Heart right ventricle (tissue), 16 donors: ENCODE measurements at regions of chr12 and their contacts with region 1.

Region 1: DNA sequence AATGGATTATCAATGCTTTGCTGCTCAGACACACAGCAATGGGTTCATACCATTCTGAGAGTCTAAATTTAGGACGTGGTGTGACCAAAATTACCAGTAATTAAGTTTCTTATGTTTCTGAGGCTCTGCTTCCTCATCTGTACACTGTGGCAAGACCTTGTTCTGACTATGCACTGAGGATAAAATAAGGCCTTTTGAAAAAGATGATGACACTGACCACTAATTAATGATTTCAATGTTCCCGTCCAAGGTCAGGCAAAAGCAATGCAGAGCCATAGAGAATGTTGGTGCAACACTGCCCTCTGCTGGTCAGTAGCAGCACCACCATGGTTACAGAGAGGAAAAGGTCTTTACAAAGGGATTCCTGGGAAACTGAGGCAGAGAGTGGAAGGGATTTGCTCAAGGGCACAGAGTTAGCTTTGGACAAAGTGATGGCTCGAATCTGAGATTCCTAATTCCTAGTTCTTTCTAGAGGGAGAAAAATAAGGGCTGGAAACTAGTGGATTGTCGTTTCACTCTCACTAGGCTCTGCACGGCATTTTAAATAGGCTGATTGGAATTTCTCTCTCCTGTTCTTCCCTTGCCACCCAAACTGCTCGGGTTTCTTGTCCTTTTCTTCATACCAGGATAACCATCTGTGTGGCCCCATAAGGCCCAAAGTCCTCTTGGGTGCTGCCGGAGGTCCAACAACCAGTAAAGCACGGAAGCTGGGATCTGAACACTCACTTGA is 22.3 kb upstream of the P2RX7 start:
- DNase-seq: peak; percentile 39 to 65
- ATAC-seq: peak; percentile 68 to 86 (median 79)
- H3K4me3 ChIP-seq: no peak overlapping the region
- H3K27ac ChIP-seq: no peak overlapping the region
- H3K4me1 ChIP-seq: peaks cover 0 to 7% (median 0%) of the 10 kb centered on the region in 9 donors
- H3K27me3 ChIP-seq: no peaks in the 10 kb centered on the region
- CTCF ChIP-seq: peak; percentile 86 to 98 (median 94)

Region 2: DNA sequence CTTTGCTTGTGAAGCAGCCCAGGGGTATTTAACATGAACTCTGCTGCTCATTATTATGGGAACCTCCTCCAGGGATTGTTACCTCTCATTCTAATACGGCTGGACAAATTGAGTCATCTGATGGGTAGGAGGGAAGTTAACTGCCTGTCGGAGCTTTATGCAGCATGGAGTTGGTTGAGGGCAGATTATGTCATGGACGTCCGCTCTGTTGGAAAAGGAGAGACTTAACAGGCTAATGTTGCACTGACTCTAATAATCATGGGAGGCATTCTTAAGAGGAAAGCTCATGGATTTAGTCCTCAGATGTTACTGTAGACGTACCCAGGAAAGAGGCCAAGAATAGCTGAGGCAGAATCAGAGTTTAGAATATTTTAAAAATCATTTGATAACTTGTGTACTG is 539.1 kb before region 1 on chr12:
- intact Hi-C with region 1: no loop called
- DNase-seq: no peak
- ATAC-seq: no peak
- H3K4me3 ChIP-seq: no peak overlapping the region
- H3K27ac ChIP-seq: peak overlapping the region in 1 of 10 donors; percentile 9
- H3K4me1 ChIP-seq: peaks cover 0 to 22% (median 11%) of the 10 kb centered on the region in 9 donors
- H3K27me3 ChIP-seq: no peaks in the 10 kb centered on the region
- CTCF ChIP-seq: no peak

Region 3: GRCh38 chr12:120598674-120599463 is 511.5 kb before region 1 on chr12:
- intact Hi-C with region 1: loop called in 1 of 10 experiments (anchors 10 kb)
- DNase-seq: no peak
- ATAC-seq: peak in 7 of 8 donors; percentile 56 to 92 (median 72)
- H3K4me3 ChIP-seq: no peak overlapping the region
- H3K27ac ChIP-seq: no peak overlapping the region
- H3K4me1 ChIP-seq: peaks cover 0 to 18% (median 5%) of the 10 kb centered on the region in 9 donors
- H3K27me3 ChIP-seq: peaks cover 0 to 3% (median 0%) of the 10 kb centered on the region in 7 donors
- CTCF ChIP-seq: no peak

Region 4: DNA sequence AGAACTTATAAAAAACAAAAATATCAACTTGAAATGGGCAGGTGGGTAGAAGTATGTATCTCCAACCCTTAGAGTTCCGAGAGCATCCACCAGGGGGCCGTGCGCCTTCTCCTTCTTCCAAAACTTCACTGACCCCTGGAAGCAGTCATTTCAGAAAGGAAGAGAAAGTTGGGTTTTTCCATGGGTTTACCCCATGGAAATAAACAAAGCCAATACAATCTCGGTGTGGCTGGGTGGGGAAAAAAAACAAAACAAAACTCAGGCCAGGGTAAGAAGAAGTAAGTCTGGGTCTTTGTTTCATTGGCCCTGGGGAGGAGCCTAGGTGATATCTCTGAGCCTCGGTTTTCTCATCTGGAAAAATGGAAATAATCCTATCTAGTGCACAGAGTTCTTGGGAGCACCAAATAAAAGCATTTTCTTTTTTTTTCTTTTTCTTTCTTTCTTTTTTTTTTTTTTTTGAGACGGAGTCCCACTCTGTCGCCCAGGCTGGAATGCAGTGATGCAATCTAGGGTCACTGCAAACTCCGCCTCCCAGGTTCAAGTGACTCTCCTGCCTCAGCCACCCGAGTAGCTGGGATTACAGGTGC is 165.6 kb before region 1 on chr12:
- intact Hi-C with region 1: loop called in 2 of 10 experiments (anchors 5 to 10 kb)
- DNase-seq: peak; percentile 44 to 50
- ATAC-seq: peak in 3 of 8 donors; percentile 47 to 53 (median 52)
- H3K4me3 ChIP-seq: no peak overlapping the region
- H3K27ac ChIP-seq: no peak overlapping the region
- H3K4me1 ChIP-seq: peaks cover 0 to 11% (median 0%) of the 10 kb centered on the region in 9 donors
- H3K27me3 ChIP-seq: peaks cover 0 to 5% (median 0%) of the 10 kb centered on the region in 7 donors
- CTCF ChIP-seq: peak; percentile 39 to 81 (median 63)

Region 5: DNA sequence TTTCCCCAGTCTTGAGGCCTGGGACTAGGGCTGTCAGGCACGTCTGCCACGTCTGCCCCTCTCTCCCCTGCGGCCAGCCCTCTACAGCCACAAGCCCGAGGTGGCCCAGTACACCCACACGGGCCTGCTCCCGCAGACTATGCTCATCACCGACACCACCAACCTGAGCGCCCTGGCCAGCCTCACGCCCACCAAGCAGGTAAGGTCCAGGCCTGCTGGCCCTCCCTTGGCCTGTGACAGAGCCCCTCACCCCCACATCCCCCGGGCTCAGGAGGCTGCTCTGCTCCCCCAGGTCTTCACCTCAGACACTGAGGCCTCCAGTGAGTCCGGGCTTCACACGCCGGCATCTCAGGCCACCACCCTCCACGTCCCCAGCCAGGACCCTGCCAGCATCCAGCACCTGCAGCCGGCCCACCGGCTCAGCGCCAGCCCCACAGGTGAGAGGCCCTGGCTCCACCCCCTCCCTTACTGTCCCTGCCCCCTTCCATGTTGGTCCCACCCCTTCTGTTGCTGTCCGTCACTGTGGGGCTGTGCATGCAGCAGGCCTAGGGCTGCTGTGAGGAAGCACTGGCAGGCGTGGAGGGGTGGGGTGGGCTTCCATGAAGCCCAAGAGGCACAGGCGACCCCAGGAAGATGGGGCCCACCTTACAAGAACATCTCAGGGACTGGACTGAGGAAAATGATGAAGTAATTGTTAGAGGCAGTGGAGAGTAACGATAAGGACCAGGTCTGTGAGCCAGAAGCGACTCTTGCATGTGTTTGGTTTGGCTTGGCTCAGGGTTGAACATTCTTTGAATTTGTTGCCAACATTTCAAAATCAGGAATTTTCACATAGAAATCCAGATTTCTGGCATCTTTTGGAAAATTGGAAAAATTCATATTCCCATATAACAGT is 110.9 kb before region 1 on chr12:
- intact Hi-C with region 1: loop called in 1 of 10 experiments (anchors 10 kb)
- DNase-seq: no peak
- ATAC-seq: peak in 3 of 8 donors; percentile 23 to 28 (median 27)
- H3K4me3 ChIP-seq: no peak overlapping the region
- H3K27ac ChIP-seq: no peak overlapping the region
- H3K4me1 ChIP-seq: peaks cover 0 to 3% (median 0%) of the 10 kb centered on the region in 9 donors
- H3K27me3 ChIP-seq: peaks cover 0 to 16% (median 0%) of the 10 kb centered on the region in 7 donors
- CTCF ChIP-seq: no peak

Region 6: DNA sequence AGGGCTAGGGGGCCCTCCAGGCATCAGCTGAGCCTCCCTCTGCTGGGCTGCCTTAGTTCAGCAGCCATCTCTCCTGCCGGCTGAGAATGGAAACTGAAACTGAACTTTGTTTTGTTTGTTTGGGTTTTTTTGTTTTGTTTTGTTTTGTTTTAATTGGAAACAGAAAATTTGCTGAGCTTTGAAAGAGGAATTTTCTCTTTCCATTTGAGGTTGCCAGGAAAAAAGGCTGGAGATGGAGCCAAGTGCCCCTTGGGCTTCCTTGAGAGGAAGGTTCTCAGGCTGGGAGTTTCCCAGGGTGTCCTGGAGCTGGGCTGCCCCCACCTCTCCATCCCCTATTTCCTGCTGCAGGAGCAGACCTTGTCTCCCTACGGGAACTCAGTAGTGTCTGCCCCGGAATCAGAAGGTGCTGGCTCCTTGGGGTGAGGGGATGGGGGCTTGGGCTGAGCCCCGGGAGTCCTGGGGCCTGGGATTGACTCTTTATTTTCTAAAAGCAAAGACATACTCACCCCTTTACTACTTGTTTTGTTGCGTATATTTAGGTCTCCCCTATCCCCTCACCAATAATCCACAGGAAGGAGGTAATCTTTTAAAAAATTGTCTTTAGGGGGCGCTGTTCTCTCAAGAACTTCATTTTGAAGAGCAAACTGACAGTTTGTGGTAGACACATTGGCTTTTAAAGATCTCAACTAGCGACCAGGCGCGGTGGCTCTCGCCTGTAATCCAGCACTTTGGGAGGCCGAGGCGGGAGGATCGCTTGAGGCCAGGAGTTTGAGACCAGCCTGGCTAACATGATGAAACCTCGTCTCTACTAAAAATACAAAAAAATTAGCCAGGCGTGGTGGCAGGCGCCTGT is 50.0 kb before region 1 on chr12:
- intact Hi-C with region 1: loop called in 3 of 10 experiments (anchors 5 kb)
- DNase-seq: peak; percentile 20 to 59
- ATAC-seq: peak; percentile 59 to 97 (median 92)
- H3K4me3 ChIP-seq: peak overlapping the region in 9 of 10 donors; percentile 10 to 55 (median 41)
- H3K27ac ChIP-seq: peak overlapping the region; percentile 25 to 93 (median 74)
- H3K4me1 ChIP-seq: peaks cover 0 to 19% (median 9%) of the 10 kb centered on the region in 9 donors
- H3K27me3 ChIP-seq: no peaks in the 10 kb centered on the region
- CTCF ChIP-seq: peak; percentile 18 to 57 (median 49)

Region 7: GRCh38 chr12:121223292-121224285 is 113.2 kb after region 1 on chr12:
- intact Hi-C with region 1: loop called in 1 of 10 experiments (anchors 10 kb)
- DNase-seq: no peak
- ATAC-seq: no peak
- H3K4me3 ChIP-seq: no peak overlapping the region
- H3K27ac ChIP-seq: peak overlapping the region in 1 of 10 donors; percentile 36
- H3K4me1 ChIP-seq: peaks cover 0 to 14% (median 0%) of the 10 kb centered on the region in 9 donors
- H3K27me3 ChIP-seq: no peaks in the 10 kb centered on the region
- CTCF ChIP-seq: peak in 1 of 9 donors; percentile 29